Aorta (tissue), 5 donors: ENCODE measurements at regions of chr7 and their contacts with region 1.

Region 1: DNA sequence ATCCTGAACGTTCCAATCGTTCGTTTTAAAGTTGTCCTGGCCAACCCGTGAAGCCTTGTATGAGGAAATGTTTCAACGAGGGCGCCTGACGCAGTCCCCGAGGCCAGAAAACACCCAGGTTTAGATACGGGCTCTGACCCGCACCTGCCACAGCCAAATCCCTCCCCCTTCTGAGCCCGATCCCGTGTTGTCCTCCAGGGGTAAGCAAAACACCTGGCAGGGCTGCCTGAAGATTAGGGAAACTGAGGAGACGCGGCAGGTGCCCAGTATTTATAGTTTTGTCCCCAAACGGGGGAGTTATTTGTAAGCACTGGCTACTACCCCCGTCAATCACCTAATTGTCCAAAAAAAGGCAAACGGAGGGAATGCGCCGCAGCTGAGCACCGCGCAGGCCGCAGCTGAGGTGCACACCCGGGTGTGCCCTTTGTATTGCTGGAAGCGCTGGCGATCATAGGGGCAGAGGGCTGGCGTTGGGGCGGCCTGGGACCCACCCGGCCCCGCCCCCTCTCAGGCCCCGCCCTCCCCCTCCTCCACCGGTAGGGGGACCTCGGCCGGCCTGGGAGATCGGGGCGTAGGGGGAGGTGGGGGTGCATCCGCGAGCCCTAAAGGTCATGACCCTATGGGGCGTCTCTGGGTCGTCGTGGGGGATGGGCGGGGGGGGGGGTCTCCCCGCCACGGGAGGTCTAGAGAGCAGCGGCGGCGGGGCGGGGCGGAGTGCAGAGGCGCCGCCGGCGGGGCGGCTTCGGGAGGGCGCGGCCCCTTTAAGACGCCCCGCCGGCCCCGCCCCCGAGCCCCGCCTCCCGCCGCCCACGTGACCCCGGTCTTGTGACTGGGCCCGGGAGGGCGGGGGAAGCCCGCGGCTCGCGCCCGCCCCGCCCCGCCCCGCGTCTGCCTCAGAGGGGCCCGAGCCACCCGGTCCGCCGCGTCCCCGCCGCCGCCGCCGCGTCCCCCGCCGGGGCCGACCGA is at the start of gene BRI3:
- DNase-seq: peak; percentile 93 to 98
- ATAC-seq: peak; percentile 90
- H3K4me3 ChIP-seq: peak within 1 kb of the TSS; percentile 85 to 96
- H3K27ac ChIP-seq: peak within 1 kb of the TSS; percentile 57 to 58
- H3K4me1 ChIP-seq: peaks cover 0 to 4% of the 10 kb centered on the region in 2 donors
- H3K27me3 ChIP-seq: no peaks in the 10 kb centered on the region
- total RNA-seq, gene BRI3: 192 to 193 TPM

Region 2: GRCh38 chr7:98251841-98252639 is 29.0 kb before region 1 on chr7 and contains the start of gene TECPR1:
- intact Hi-C with region 1: loop called in 1 of 2 experiments (anchors 2 kb)
- DNase-seq: peak; percentile 97 to 98
- ATAC-seq: peak; percentile 99
- H3K4me3 ChIP-seq: peak within 1 kb of the TSS; percentile 75 to 80
- H3K27ac ChIP-seq: peak within 1 kb of the TSS in 1 of 2 donors; percentile 39
- H3K4me1 ChIP-seq: no peaks in the 10 kb centered on the region
- H3K27me3 ChIP-seq: no peaks in the 10 kb centered on the region
- total RNA-seq, gene TECPR1: 33.8 to 48.0 TPM

Region 3: GRCh38 chr7:98418636-98419315 is 137.7 kb after region 1 on chr7:
- intact Hi-C with region 1: loop called in 1 of 2 experiments (anchors 10 kb)
- DNase-seq: peak; percentile 74 to 81
- ATAC-seq: no peak
- H3K4me3 ChIP-seq: no peak overlapping the region
- H3K27ac ChIP-seq: no peak overlapping the region
- H3K4me1 ChIP-seq: no peaks in the 10 kb centered on the region
- H3K27me3 ChIP-seq: peaks cover 0 to 2% of the 10 kb centered on the region in 2 donors

Region 4: DNA sequence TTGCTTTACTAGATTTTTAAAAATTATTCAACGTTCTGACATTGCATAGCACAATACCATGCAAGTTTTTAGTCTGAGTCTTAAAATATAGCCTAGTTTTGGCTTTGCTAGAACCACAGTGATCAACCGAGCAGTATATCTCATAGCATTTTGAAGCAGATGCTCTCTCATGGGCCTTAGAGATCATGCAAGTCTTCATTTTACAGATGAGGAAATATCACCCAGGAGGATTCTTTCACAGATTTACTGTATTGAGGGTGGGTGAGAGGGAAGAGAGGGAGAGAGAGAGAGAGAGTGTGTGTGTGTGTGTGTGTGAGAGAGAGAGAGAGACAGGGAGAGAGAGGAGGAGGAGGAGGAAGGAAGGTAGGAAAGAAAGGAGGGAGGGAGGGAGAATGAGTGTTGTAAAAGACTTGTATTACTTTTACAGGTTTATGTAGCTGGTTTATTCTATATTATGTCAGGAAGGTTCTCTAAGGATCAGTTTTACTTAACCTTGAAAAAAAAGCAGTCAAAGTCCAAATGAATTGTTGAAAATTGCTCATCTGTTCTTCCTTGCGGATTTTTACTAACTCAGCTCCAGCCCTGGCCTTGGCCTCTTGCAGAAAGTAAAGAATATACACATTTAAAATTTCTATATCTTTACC is 321.8 kb after region 1 on chr7:
- intact Hi-C with region 1: no loop called
- DNase-seq: no peak
- ATAC-seq: no peak
- H3K4me3 ChIP-seq: no peak overlapping the region
- H3K27ac ChIP-seq: no peak overlapping the region
- H3K4me1 ChIP-seq: no peaks in the 10 kb centered on the region
- H3K27me3 ChIP-seq: no peaks in the 10 kb centered on the region

Region 5: DNA sequence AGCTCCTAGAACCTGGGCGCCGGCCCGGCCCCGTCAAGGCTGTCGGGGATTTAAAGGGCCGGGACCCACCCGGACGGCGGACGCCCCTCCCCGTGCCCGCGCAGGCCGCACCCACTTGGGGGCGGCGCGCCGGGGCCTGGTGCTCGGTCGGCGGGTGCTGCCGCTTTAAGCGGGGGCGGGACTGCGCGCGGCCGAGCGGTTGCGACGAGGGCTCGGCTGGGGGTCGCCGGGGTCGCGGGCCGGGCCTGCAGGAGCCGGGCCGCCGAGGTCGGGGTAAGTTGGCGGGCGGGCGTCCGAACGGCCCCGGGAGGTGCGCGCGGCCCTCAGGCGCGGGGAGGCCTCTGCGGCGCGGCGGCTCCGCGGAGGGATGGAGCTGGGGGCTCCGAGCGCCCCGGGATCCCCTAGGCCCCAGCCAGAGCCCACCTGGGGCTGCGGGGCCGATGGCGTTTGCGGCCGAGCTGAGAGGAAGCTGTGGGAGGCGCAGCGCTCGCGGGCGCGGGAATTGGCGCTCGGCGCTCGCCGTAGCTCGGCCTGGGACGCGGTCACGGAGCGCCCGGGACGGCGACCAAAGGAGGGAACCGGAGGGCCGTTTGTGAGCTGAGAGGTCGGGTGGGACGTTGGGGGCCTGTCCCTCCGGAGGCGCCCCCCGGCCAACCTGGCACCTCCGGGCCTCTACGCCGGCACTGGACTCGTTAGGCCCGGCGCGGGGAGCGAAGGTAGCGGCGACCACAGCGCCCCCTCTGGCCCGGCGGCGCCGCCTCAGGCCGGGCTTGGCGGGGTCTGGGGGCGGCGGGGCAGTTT is 597.5 kb after region 1 on chr7 and contains the start of gene TRRAP:
- intact Hi-C with region 1: loop called in 1 of 2 experiments (anchors 10 kb)
- DNase-seq: peak; percentile 83 to 92
- ATAC-seq: peak; percentile 91
- H3K4me3 ChIP-seq: peak within 1 kb of the TSS; percentile 98 to 99
- H3K27ac ChIP-seq: peak within 1 kb of the TSS; percentile 80 to 94
- H3K4me1 ChIP-seq: no peaks in the 10 kb centered on the region
- H3K27me3 ChIP-seq: no peaks in the 10 kb centered on the region
- total RNA-seq, gene TRRAP: 36.7 to 41.9 TPM